Activated naive CD8-positive, alpha-beta T cell treated with anti-CD3 and anti-CD28 coated beads, Interleukin-2, amount 10 ng/mL, durations not matched to agents 7 days and 5 days (primary cell): ENCODE measurements at regions of chr12 and their contacts with region 1.

Region 1: DNA sequence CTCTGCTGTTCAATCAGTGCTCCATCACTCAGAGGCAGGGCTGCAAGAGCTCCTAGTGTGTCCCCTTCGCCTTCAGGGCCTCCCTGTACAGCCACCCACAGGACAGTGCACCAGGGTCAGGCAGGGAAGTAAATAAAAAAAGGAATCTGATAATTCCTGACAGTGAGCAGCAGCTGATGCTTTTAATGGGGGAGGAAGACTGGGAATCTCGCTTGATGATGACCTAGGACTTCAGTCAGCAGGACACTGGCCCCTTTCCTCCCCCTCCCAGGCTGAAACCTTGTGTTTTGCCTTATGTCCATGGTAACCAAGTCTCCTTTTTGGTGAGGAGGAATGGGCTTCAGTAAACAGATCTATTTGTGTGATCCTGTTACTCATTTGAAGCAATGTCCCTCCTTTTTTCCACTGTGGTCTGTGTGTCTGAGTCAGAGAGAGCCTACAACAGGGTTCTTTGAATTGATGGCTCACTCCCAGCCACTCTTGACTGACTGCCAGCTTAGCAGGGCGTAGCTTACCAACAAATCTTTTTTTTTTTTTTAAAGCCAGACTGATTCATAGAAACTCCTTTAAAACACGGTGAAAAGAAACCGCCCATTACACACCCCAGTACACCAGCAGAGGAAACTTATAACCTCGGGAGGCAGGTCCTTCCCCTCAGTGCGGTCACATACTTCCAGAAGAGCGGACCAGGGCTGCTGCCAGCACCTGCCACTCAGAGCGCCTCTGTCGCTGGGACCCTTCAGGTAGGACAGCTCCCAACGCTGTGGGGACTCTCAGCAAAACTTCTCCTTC is at the start of gene EMP1:
- DNase-seq: peak; percentile 62
- ATAC-seq: peak; percentile 97
- H3K4me3 Mint-ChIP-seq: peak within 1 kb of the TSS; percentile 77
- H3K27ac Mint-ChIP-seq: peak within 1 kb of the TSS; percentile 67
- H3K4me1 Mint-ChIP-seq: peaks cover 28% of the 10 kb centered on the region
- H3K27me3 Mint-ChIP-seq: peaks cover 57% of the 10 kb centered on the region
- total RNA-seq, gene EMP1: 7.3 to 8.6 TPM

Region 2: DNA sequence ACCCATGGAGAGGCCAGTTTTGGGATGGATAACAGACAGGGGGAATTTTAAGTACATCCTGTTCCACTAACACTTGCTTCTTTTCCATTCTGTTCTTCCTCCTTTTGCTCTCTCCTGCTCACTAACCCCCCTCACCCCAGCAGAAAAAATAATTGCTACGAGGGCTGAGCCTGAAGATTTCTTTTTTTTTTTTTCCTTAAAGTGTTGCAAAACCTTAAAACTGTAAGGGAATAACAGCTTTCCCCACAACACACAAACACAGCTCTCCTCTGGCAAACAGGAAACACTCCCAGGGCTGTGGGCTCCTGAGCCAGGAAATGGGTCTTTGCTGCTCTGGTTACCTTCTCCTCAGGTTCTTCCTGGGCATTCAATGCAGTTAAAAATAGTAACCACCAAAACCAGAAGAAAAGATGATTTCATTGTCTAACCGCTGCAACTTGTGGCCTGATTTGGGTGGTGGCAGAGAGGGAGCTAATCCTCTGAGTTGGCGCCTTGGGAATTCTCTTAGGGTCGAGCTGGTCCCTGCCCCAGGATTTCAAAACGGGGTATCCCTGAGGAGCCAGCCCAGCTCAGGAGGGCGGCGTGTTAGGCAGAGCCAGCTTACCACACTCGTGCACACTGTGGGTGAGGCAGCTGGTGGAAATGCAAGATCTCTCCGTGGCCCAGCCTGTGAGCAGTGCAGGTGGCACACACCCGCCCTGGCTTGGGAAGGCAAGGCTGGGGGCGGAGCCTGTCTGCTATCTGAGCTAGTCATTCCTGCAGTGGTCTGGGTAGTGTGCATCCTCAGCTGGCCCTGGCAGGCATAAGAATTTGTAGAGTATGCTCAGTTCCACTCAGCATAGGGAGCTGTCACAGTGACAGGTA is 16.9 kb before region 1 on chr12:
- POLR2A ChIA-PET with region 1: interaction called, 13 read pairs
- DNase-seq: peak; percentile 61
- ATAC-seq: peak; percentile 90
- H3K4me3 Mint-ChIP-seq: peak overlapping the region; percentile 79
- H3K27ac Mint-ChIP-seq: peak overlapping the region; percentile 74
- H3K4me1 Mint-ChIP-seq: peaks cover 27% of the 10 kb centered on the region
- H3K27me3 Mint-ChIP-seq: peaks cover 41% of the 10 kb centered on the region

Region 3: DNA sequence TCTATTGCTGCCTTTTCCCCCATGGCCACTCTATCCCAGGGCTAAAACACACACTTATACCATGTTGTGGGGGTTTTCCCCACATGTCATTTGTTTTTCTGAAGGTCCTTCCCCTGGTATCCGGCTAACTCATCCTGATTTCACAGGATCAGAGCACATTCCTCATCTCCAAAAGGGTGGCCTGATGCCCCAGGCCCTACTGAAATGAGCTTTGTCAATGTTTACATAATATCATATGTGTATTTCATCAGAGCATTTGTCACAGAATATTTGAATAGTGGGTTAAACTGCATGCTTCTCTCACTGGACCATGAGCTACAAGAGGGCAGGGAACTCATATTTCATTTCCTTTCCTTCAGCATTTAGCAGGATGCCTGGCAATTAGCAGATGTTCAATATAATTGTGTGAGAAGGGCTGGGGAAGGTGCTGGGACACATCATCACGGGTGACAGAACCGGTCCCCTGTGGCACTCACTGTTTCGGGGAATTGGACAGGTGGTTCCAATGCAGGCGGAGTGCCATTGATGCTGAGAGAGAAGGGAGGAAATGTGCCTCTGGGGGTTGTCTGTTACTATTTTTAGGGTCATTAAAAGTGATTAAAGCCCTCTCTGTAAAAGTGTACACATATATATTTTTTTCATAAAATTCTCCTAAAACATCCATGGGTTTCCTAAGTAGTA is 27.0 kb after region 1 on chr12:
- POLR2A ChIA-PET with region 1: no interaction called
- DNase-seq: no peak
- ATAC-seq: no peak
- H3K4me3 Mint-ChIP-seq: no peak overlapping the region
- H3K27ac Mint-ChIP-seq: no peak overlapping the region
- H3K4me1 Mint-ChIP-seq: no peaks in the 10 kb centered on the region
- H3K27me3 Mint-ChIP-seq: peaks cover 44% of the 10 kb centered on the region